Sigmoid colon (tissue), 7 donors: ENCODE measurements at regions of chr21 and their contacts with region 1.

Region 1: GRCh38 chr21:37267269-37268184 is at the start of gene VPS26C:
- DNase-seq: peak; percentile 99
- H3K4me3 ChIP-seq: peak within 1 kb of the TSS; percentile 79 to 98 (median 97)
- H3K27ac ChIP-seq: peak within 1 kb of the TSS; percentile 95 to 99 (median 98)
- H3K4me1 ChIP-seq: peaks cover 0 to 33% (median 28%) of the 10 kb centered on the region in 4 donors
- H3K27me3 ChIP-seq: no peaks in the 10 kb centered on the region
- CTCF ChIP-seq: no peak
- EP300 ChIP-seq: peak in 2 of 4 donors; percentile 51 to 84
- POLR2A ChIP-seq: peak; percentile 65 to 72
- total RNA-seq, gene VPS26C: 47.1 to 71.7 (median 55.8) TPM

Region 2: GRCh38 chr21:37072988-37073416 is 194.5 kb before region 1 on chr21 and contains the starts of genes PIGP and TTC3:
- intact Hi-C with region 1: loop called (anchors 5 kb)
- DNase-seq: peak; percentile 97
- H3K4me3 ChIP-seq: peak within 1 kb of the TSS; percentile 88 to 93 (median 90)
- H3K27ac ChIP-seq: peak within 1 kb of the TSS; percentile 94 to 99 (median 98)
- H3K4me1 ChIP-seq: peaks cover 0 to 36% (median 26%) of the 10 kb centered on the region in 4 donors
- H3K27me3 ChIP-seq: no peaks in the 10 kb centered on the region
- CTCF ChIP-seq: no peak
- EP300 ChIP-seq: peak in 1 of 4 donors; percentile 48
- POLR2A ChIP-seq: peak; percentile 3 to 61
- total RNA-seq, gene PIGP: 10.2 to 36.7 (median 17.8) TPM
- total RNA-seq, gene TTC3: 108 to 151 (median 114) TPM

Region 3: GRCh38 chr21:37101384-37101783 is 166.1 kb before region 1 on chr21:
- intact Hi-C with region 1: no loop called
- DNase-seq: no peak
- H3K4me3 ChIP-seq: no peak overlapping the region
- H3K27ac ChIP-seq: no peak overlapping the region
- H3K4me1 ChIP-seq: no peaks in the 10 kb centered on the region
- H3K27me3 ChIP-seq: no peaks in the 10 kb centered on the region
- CTCF ChIP-seq: no peak
- EP300 ChIP-seq: no peak
- POLR2A ChIP-seq: no peak

Region 4: DNA sequence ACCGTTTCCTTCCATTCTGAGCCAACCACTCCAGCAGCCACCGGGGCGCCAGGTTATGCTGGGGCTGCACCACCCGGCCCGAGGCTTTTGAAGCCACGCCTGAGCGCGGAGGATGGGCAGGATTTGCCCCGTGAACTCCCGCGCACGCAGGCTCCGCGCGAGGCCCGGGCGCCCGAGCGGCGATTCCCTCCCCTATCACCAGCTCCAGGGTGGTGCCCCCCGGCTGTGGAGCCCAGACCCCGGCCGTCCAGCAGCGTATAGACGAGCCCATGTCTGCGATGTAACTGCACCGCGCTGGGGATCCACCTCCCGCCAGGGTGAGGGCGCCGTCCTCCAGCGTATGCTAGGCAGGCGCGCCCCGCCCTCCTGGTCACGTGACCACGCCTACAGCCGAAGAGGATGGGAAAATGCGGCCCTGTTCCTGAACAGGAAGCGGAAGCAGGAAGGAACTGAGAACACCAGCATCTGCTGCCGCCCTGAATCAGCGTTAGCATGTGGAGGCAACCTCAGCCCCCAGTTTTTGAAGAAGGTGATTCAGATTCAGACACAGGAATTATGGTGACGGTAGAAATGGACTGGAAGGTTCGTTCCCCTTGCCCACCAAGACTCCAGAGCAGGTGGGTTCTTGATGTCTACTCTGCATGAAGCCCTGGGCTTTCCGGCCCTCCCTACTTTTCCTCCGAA is 46.4 kb before region 1 on chr21:
- intact Hi-C with region 1: loop called (anchors 5 kb)
- DNase-seq: peak; percentile 97
- H3K4me3 ChIP-seq: peak overlapping the region; percentile 51 to 65 (median 60)
- H3K27ac ChIP-seq: peak overlapping the region; percentile 74 to 87 (median 78)
- H3K4me1 ChIP-seq: peaks cover 0 to 9% (median 6%) of the 10 kb centered on the region in 4 donors
- H3K27me3 ChIP-seq: no peaks in the 10 kb centered on the region
- CTCF ChIP-seq: peak in 2 of 4 experiments; percentile 10 to 22
- EP300 ChIP-seq: no peak
- POLR2A ChIP-seq: peak in 1 of 2 donors; percentile 46

Region 5: GRCh38 chr21:37341607-37341960 is 74.1 kb after region 1 on chr21:
- intact Hi-C with region 1: loop called (anchors 2 kb)
- DNase-seq: no peak
- H3K4me3 ChIP-seq: no peak overlapping the region
- H3K27ac ChIP-seq: peak overlapping the region in 2 of 4 donors; percentile 11 to 15
- H3K4me1 ChIP-seq: peaks cover 0 to 21% (median 16%) of the 10 kb centered on the region in 4 donors
- H3K27me3 ChIP-seq: no peaks in the 10 kb centered on the region
- CTCF ChIP-seq: no peak
- EP300 ChIP-seq: no peak
- POLR2A ChIP-seq: no peak

Region 6: DNA sequence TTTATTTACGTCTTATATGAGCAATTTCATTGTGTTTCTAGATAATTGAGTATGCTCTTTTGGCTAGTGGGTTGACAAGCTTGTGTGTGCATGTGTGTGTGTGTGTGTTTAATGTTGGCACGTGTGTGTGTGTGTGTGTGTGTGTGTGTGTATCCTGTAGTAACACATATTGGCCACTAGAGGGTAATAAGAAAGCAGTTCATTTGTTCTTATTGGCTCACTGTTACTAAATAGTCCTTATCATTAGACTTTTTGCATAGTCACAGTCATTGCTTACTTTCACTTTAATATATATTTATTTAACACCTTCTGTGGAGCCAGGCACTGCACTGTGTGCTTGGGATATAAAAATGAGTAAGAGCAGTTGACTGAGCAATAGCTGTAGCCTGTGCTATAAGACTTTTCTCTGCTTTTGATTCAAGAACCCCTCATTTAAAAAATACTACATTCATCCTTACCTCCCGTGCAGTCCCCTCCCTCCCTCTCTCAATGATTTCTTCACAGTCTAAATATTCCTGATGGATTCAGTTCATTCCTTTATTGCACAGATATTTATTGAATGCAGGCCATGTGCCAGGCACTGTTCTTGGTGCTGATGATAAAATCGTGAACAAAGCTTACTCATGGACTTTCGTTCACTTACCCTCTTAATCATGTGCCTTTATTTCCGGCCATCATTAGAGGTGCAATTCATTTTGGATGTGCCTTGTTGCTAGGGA is 195.7 kb after region 1 on chr21:
- intact Hi-C with region 1: loop called (anchors 10 kb)
- DNase-seq: no peak
- H3K4me3 ChIP-seq: no peak overlapping the region
- H3K27ac ChIP-seq: peak overlapping the region in 2 of 4 donors; percentile 24 to 30
- H3K4me1 ChIP-seq: peaks cover 0 to 65% (median 51%) of the 10 kb centered on the region in 4 donors
- H3K27me3 ChIP-seq: no peaks in the 10 kb centered on the region
- CTCF ChIP-seq: peak; percentile 37 to 88 (median 44)
- EP300 ChIP-seq: no peak
- POLR2A ChIP-seq: no peak

Region 7: DNA sequence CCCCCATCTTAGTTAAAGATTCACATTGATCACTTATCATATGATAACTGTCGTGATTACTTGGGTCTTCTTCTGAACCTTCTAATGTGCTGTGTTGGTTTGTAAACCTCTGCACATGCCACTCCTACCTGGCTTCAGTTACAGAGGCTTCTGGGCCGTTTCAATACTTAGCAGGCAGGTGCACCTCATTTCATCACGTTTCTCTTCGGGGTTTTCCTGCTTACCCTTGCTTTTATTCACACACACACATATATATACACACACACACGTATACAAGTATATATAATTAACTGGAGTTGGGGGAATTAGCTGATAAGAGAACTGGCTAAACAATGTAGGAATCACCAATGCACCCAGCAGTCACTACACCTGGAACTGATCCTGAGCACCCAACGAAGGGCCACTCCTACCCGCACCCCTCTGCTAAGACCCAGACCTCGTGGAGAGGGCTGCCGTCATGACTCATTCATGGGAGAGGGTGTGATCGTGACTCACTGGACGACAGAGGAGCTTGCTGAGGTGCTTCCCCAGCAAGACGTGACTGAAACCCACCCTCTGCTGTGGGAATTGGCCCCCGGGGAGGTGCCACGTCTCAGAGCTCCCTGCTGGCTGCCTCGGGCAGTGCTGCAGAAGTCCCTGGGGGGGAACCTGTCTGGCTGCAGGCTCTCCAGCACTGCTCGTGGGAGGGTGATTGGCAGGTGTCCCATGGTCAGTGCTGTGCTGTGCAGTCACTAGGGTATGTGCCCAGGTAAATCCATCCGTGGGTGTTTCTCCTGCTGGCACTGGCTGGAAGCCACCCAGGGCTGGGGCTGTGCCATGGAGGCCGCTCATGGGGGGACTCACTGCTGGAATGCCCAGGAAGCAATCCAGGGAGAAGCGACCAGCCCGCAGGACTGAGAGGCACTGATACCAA is 265.6 kb after region 1 on chr21:
- intact Hi-C with region 1: no loop called
- DNase-seq: no peak
- H3K4me3 ChIP-seq: no peak overlapping the region
- H3K27ac ChIP-seq: no peak overlapping the region
- H3K4me1 ChIP-seq: peaks cover 2 to 9% (median 8%) of the 10 kb centered on the region in 4 donors
- H3K27me3 ChIP-seq: peaks cover 0 to 7% (median 0%) of the 10 kb centered on the region in 3 donors
- CTCF ChIP-seq: no peak
- EP300 ChIP-seq: no peak
- POLR2A ChIP-seq: no peak

Region 8: GRCh38 chr21:37546949-37547614 is 279.6 kb after region 1 on chr21:
- intact Hi-C with region 1: loop called (anchors 5 kb)
- DNase-seq: peak; percentile 66
- H3K4me3 ChIP-seq: peak overlapping the region in 2 of 4 donors; percentile 13 to 15
- H3K27ac ChIP-seq: peak overlapping the region; percentile 45 to 65 (median 53)
- H3K4me1 ChIP-seq: peaks cover 0 to 52% (median 39%) of the 10 kb centered on the region in 4 donors
- H3K27me3 ChIP-seq: no peaks in the 10 kb centered on the region
- CTCF ChIP-seq: no peak
- EP300 ChIP-seq: peak in 2 of 4 donors; percentile 47 to 66
- POLR2A ChIP-seq: no peak

Region 9: GRCh38 chr21:37563641-37564340 is 296.3 kb after region 1 on chr21:
- intact Hi-C with region 1: loop called (anchors 1 kb)
- DNase-seq: peak; percentile 96
- H3K4me3 ChIP-seq: peak overlapping the region; percentile 63 to 85 (median 74)
- H3K27ac ChIP-seq: peak overlapping the region; percentile 91 to 93 (median 92)
- H3K4me1 ChIP-seq: peaks cover 0 to 26% (median 17%) of the 10 kb centered on the region in 4 donors
- H3K27me3 ChIP-seq: no peaks in the 10 kb centered on the region
- CTCF ChIP-seq: peak in 3 of 4 experiments; percentile 8 to 43 (median 37)
- EP300 ChIP-seq: no peak
- POLR2A ChIP-seq: peak; percentile 18 to 21